Heart left ventricle (tissue), 16 donors: ENCODE measurements at regions of chr16 and their contacts with region 1.

Region 1: GRCh38 chr16:82639666-82640336 is 13.0 kb downstream of the CDH13 start:
- DNase-seq: peak; percentile 54 to 77 (median 58)
- ATAC-seq: peak in 3 of 4 donors; percentile 62 to 72 (median 64)
- H3K4me3 ChIP-seq: no peak overlapping the region
- H3K27ac ChIP-seq: peak overlapping the region in 3 of 12 donors; percentile 1 to 62 (median 40)
- H3K4me1 ChIP-seq: peaks cover 0 to 61% (median 29%) of the 10 kb centered on the region in 12 donors
- H3K27me3 ChIP-seq: no peaks in the 10 kb centered on the region
- CTCF ChIP-seq: peak; percentile 59 to 86 (median 76)
- POLR2A ChIP-seq: no peak

Region 2: GRCh38 chr16:82660966-82661365 is 21.2 kb after region 1 on chr16:
- intact Hi-C with region 1: no loop called
- DNase-seq: no peak
- ATAC-seq: no peak
- H3K4me3 ChIP-seq: no peak overlapping the region
- H3K27ac ChIP-seq: no peak overlapping the region
- H3K4me1 ChIP-seq: peaks cover 0 to 21% (median under 1%) of the 10 kb centered on the region in 12 donors
- H3K27me3 ChIP-seq: no peaks in the 10 kb centered on the region
- CTCF ChIP-seq: no peak
- POLR2A ChIP-seq: no peak

Region 3: DNA sequence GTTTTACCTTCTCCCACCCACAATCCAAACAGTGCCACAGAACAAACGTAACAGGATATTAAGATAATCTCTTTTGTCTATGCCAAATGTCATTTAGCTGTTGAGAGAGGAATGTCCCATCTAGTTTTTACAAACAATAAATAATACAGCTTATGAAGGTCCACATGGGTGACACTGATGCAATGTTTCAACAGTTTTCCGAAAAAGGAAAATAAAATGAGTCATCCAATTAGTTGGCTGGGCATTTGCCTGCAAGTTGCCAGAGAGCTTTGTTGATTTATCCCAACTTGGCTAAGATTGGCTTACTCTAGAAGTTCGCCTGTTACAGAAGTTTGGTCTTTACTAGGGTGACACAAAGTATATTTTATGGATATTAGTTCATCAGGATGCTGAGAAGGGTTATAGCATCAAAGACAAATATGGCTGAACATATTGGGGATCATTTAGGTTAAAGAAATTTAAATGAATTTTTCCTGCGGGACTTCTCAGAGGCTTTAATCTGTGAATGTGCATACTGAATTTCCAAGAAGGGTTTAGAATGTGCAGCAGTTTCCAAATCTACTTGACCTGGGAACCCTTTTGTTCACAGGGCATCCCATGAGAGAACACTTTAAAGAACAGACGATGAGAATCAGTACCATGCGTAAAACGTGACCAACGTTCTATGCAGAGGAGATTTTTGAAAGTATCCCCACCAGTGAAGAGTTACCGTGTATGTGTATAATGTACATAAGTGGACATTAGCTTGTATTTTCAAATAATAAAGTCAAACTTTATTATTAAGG is 60.1 kb after region 1 on chr16:
- intact Hi-C with region 1: loop called in 4 of 10 experiments (anchors 5 kb)
- DNase-seq: peak in 4 of 5 donors; percentile 37 to 50 (median 44)
- ATAC-seq: peak; percentile 76 to 81 (median 80)
- H3K4me3 ChIP-seq: peak overlapping the region in 1 of 12 donors; percentile 11
- H3K27ac ChIP-seq: peak overlapping the region; percentile 64 to 90 (median 82)
- H3K4me1 ChIP-seq: peaks cover 7 to 65% (median 52%) of the 10 kb centered on the region in 12 donors
- H3K27me3 ChIP-seq: no peaks in the 10 kb centered on the region
- CTCF ChIP-seq: no peak
- POLR2A ChIP-seq: no peak

Region 4: GRCh38 chr16:82748026-82748425 is 108.2 kb after region 1 on chr16:
- intact Hi-C with region 1: loop called in 1 of 10 experiments (anchors 10 kb)
- DNase-seq: peak; percentile 46 to 75 (median 60)
- ATAC-seq: peak in 3 of 4 donors; percentile 68 to 77 (median 75)
- H3K4me3 ChIP-seq: peak overlapping the region in 1 of 12 donors; percentile 0
- H3K27ac ChIP-seq: peak overlapping the region in 7 of 12 donors; percentile 5 to 41 (median 16)
- H3K4me1 ChIP-seq: peaks cover 0 to 48% (median 13%) of the 10 kb centered on the region in 12 donors
- H3K27me3 ChIP-seq: no peaks in the 10 kb centered on the region
- CTCF ChIP-seq: peak in 11 of 12 donors; percentile 9 to 48 (median 26)
- POLR2A ChIP-seq: no peak

Region 5: DNA sequence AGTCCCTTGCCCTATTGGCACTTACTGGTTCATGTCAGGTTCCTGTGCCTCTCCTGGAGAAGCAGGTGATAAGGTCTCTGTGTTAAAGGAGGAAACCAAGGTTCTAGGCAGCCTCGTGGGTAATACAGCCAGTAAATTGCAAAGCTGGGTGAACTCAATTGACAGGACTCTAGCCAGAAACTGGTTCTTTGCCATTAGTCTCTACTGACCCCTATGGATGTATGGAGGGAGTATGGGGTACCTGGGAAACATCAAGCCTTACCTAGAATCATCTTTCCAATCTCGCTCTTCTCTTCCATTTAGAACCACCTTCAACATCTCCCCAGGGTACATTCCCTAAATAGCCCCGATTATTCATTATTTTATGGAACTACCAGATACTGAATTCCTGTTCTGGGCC is 156.2 kb after region 1 on chr16:
- intact Hi-C with region 1: no loop called
- DNase-seq: no peak
- ATAC-seq: no peak
- H3K4me3 ChIP-seq: no peak overlapping the region
- H3K27ac ChIP-seq: no peak overlapping the region
- H3K4me1 ChIP-seq: peaks cover 0 to 3% (median 0%) of the 10 kb centered on the region in 12 donors
- H3K27me3 ChIP-seq: no peaks in the 10 kb centered on the region
- CTCF ChIP-seq: peak in 3 of 12 donors; percentile 14 to 30 (median 17)
- POLR2A ChIP-seq: no peak

Region 6: DNA sequence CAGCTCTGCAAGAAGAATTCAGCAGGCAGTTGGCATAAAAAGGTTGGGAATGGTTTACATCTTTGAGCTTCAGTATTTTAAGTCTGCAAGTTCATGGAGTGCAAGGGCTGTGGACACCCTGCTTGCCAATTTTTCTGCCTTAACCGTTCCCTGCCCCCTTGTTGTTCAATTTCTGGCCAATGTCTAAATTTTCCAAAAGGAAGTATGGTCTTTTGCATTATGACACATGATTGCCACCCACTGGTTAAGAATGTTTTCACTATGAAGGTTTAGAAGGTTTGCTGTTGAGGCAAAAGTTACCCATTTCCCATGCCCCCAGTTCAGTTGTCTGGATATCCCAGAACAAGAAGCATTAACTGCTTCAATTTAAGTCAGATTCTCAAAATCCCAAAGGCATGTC is 428.9 kb after region 1 on chr16:
- intact Hi-C with region 1: loop called in 2 of 10 experiments (anchors 10 kb)
- DNase-seq: no peak
- ATAC-seq: peak in 1 of 4 donors; percentile 13
- H3K4me3 ChIP-seq: no peak overlapping the region
- H3K27ac ChIP-seq: no peak overlapping the region
- H3K4me1 ChIP-seq: peaks cover 0 to 8% (median 0%) of the 10 kb centered on the region in 12 donors
- H3K27me3 ChIP-seq: no peaks in the 10 kb centered on the region
- CTCF ChIP-seq: peak in 9 of 12 donors; percentile 18 to 60 (median 22)
- POLR2A ChIP-seq: no peak

Region 7: DNA sequence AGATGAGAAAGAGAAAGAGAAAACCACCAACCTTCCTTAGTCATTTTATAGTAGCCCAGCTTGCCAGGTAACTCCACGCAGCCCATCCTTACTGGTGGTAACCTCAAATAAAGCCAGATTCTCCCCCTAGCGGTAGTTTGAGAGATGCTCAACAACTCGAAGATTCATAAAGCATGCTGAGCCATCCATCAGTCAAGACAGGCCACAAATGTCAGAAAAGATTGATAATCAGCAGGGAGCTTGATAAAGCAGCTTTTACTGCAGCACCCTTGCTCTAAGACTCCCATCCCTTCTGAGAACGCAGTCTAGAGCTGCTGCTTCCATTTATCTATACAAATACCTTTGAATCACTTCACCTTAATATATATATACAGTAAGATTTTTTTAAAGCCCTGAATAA is 716.5 kb after region 1 on chr16:
- intact Hi-C with region 1: loop called in 1 of 10 experiments (anchors 10 kb)
- DNase-seq: peak in 1 of 5 donors; percentile 12
- ATAC-seq: peak in 3 of 4 donors; percentile 59 to 75 (median 61)
- H3K4me3 ChIP-seq: no peak overlapping the region
- H3K27ac ChIP-seq: no peak overlapping the region
- H3K4me1 ChIP-seq: peaks cover 0 to 8% (median 0%) of the 10 kb centered on the region in 12 donors
- H3K27me3 ChIP-seq: no peaks in the 10 kb centered on the region
- CTCF ChIP-seq: peak; percentile 40 to 67 (median 51)
- POLR2A ChIP-seq: no peak

Region 8: GRCh38 chr16:83779886-83780285 is 1140.1 kb after region 1 on chr16:
- intact Hi-C with region 1: loop called in 1 of 10 experiments (anchors 5 kb)
- DNase-seq: no peak
- ATAC-seq: peak in 2 of 4 donors; percentile 26 to 32
- H3K4me3 ChIP-seq: peak overlapping the region in 1 of 12 donors; percentile 3
- H3K27ac ChIP-seq: peak overlapping the region in 3 of 12 donors; percentile 2 to 25 (median 7)
- H3K4me1 ChIP-seq: peaks cover 0 to 39% (median 20%) of the 10 kb centered on the region in 12 donors
- H3K27me3 ChIP-seq: no peaks in the 10 kb centered on the region
- CTCF ChIP-seq: no peak
- POLR2A ChIP-seq: no peak